Common myeloid progenitor, CD34-positive (primary cell): ENCODE measurements at regions of chr11 and their contacts with region 1.

Region 1: GRCh38 chr11:33161120-33162005 is at the start of gene CSTF3:
- DNase-seq: peak; percentile 97 to 98 (median 97)
- H3K4me3 ChIP-seq: peak within 1 kb of the TSS; percentile 54 to 99 (median 95)
- H3K27ac ChIP-seq: peak within 1 kb of the TSS; percentile 95
- H3K4me1 ChIP-seq: peaks cover 14 to 35% (median 24%) of the 10 kb centered on the region in 4 experiments
- H3K27me3 ChIP-seq: no peaks in the 10 kb centered on the region

Region 2: DNA sequence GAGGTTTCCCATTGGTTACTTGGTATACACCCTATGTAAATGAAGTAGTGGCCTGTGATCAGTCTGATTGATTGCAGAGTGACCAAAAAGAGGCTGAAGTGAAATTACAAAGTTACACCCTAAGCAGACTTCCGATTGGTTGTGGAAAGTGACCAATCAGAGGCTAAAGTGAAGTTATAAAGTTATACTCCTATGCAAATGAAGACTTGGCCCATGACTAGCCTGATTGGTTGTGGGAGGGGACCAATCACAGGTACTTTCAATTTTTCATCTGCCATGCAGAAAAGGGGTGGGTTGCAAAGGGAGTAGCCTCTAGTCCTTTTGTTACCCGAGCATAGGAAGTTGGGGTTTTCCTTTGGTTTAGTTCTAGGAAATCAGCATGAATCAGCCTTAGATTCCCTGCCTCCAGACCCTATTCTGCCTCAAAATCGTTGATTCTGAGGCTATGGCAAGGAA is 18.0 kb after region 1 on chr11:
- CTCF ChIA-PET with region 1: interaction called, 25 read pairs
- POLR2A ChIA-PET with region 1: no interaction called
- DNase-seq: peak; percentile 66 to 84 (median 82)
- H3K4me3 ChIP-seq: peak overlapping the region in 2 of 7 experiments; percentile 30 to 47
- H3K27ac ChIP-seq: no peak overlapping the region
- H3K4me1 ChIP-seq: peaks cover 0 to 27% (median 12%) of the 10 kb centered on the region in 4 experiments
- H3K27me3 ChIP-seq: no peaks in the 10 kb centered on the region

Region 3: DNA sequence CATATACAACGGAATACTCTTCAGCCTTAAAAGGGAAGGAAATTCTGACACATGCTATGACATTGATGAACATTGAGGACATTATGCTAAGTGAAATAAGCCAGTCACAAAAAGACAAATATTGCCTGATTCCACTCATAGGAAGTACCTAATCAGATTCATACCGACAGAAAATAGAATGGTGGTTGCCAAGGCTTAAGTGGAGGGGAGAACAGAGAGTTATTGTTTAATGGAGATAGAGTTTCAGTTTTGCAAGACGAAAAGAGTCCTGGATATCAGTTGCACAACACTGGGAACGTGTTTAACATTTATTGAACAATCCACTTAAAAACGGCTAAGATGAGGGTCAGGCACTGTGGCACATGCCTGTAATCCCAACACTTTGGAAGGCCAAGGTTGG is 50.2 kb after region 1 on chr11:
- CTCF ChIA-PET with region 1: no interaction called
- POLR2A ChIA-PET with region 1: no interaction called
- DNase-seq: no peak
- H3K4me3 ChIP-seq: no peak overlapping the region
- H3K27ac ChIP-seq: no peak overlapping the region
- H3K4me1 ChIP-seq: peaks cover 0 to 18% (median 0%) of the 10 kb centered on the region in 4 experiments
- H3K27me3 ChIP-seq: no peaks in the 10 kb centered on the region

Region 4: DNA sequence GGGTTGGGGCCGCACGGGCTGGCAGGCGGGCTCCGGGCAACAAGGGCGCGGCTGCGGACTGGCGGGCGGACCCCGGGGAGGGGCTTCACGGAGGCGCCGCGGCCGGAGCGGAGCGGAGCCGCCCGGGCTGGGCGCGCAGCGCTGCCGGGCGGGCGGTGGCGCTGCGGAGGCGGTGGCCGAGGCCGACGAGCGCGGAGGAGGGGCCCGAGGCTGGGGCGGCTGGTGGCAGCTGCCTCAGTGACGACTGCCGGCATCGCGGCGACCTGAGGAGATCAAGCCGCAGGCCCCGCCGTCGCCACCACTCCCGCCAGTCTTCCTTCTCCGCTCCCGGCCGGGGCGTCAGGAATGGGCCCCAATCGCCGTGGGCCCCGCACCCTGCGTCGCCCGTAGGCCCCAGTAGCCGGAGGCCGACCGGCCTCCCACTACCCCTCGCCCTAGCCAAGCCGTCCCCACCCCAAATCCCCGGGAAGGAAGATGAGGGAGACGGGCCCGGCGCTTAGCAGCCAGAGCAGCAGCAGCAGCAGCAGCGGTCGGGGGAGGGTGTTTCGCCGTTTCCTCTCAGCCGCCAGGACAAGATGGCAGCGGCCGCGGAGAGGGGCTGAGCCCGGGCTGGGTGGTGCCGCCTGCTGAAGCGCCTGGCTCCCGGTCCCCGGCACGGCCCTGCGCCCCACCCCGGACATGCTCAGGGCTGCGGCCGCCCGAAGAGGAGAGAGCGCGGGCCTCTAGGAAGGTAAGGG is 96.0 kb after region 1 on chr11 and contains the start of gene HIPK3:
- CTCF ChIA-PET with region 1: interaction called, 10 read pairs
- POLR2A ChIA-PET with region 1: no interaction called
- DNase-seq: peak; percentile 80 to 89 (median 85)
- H3K4me3 ChIP-seq: peak within 1 kb of the TSS; percentile 82 to 100 (median 96)
- H3K27ac ChIP-seq: peak within 1 kb of the TSS; percentile 98 to 99
- H3K4me1 ChIP-seq: peaks cover 11 to 35% (median 21%) of the 10 kb centered on the region in 4 experiments
- H3K27me3 ChIP-seq: no peaks in the 10 kb centered on the region

Region 5: GRCh38 chr11:33317662-33318061 is 156.3 kb after region 1 on chr11:
- CTCF ChIA-PET with region 1: interaction called, 31 read pairs
- POLR2A ChIA-PET with region 1: no interaction called
- DNase-seq: peak in 1 of 3 donors; percentile 40
- H3K4me3 ChIP-seq: no peak overlapping the region
- H3K27ac ChIP-seq: no peak overlapping the region
- H3K4me1 ChIP-seq: peaks cover 13 to 31% (median 23%) of the 10 kb centered on the region in 4 experiments
- H3K27me3 ChIP-seq: no peaks in the 10 kb centered on the region

Region 6: GRCh38 chr11:33324302-33324985 is 163.1 kb after region 1 on chr11:
- CTCF ChIA-PET with region 1: interaction called, 74 read pairs
- POLR2A ChIA-PET with region 1: no interaction called
- DNase-seq: peak in 2 of 3 donors; percentile 66 to 75
- H3K4me3 ChIP-seq: peak overlapping the region in 2 of 7 experiments; percentile 21 to 23
- H3K27ac ChIP-seq: no peak overlapping the region
- H3K4me1 ChIP-seq: peaks cover 21 to 49% (median 36%) of the 10 kb centered on the region in 4 experiments
- H3K27me3 ChIP-seq: no peaks in the 10 kb centered on the region

Region 7: DNA sequence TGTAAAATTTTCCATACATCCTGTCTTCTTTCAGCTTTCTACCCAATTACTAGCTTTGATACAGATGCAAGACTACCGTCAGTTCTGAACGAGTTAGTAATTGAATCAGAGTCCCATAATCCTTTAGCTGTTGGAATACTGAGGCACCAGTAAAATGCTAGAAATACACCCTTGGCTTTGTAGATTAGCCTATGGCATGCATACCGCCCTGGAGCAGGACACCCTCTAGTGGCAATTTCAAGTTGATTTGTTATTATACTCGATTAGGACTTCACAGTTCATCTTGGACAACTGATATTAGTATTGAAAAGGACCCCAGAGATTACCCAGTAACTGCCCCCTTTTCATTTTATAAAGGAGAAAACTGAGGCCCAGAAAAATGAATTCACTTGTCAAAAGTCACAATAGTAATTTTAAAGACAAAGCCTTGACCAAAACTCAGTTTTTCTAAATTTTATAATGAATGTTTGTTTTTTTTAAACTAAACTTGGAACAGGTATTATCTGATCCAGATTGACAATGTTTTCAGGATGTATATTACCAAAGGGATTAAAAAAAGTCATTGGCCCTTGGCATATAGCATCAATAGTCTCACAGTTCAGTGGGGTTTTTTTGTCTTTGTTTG is 168.5 kb after region 1 on chr11:
- CTCF ChIA-PET with region 1: interaction called, 74 read pairs
- POLR2A ChIA-PET with region 1: no interaction called
- DNase-seq: peak; percentile 80 to 86 (median 82)
- H3K4me3 ChIP-seq: no peak overlapping the region
- H3K27ac ChIP-seq: no peak overlapping the region
- H3K4me1 ChIP-seq: peaks cover under 1 to 20% (median 8%) of the 10 kb centered on the region in 4 experiments
- H3K27me3 ChIP-seq: no peaks in the 10 kb centered on the region

Region 8: GRCh38 chr11:33344611-33345010 is 183.2 kb after region 1 on chr11:
- CTCF ChIA-PET with region 1: interaction called, 82 read pairs
- POLR2A ChIA-PET with region 1: no interaction called
- DNase-seq: peak; percentile 57 to 84 (median 81)
- H3K4me3 ChIP-seq: no peak overlapping the region
- H3K27ac ChIP-seq: peak overlapping the region in 1 of 2 experiments; percentile 17
- H3K4me1 ChIP-seq: peaks cover 6 to 22% (median 10%) of the 10 kb centered on the region in 4 experiments
- H3K27me3 ChIP-seq: no peaks in the 10 kb centered on the region